Activated B cell treated with CpG ODN at 0.5 μM for 24 hours (primary cell): ENCODE measurements at regions of chr1 and their contacts with region 1.

Region 1: DNA sequence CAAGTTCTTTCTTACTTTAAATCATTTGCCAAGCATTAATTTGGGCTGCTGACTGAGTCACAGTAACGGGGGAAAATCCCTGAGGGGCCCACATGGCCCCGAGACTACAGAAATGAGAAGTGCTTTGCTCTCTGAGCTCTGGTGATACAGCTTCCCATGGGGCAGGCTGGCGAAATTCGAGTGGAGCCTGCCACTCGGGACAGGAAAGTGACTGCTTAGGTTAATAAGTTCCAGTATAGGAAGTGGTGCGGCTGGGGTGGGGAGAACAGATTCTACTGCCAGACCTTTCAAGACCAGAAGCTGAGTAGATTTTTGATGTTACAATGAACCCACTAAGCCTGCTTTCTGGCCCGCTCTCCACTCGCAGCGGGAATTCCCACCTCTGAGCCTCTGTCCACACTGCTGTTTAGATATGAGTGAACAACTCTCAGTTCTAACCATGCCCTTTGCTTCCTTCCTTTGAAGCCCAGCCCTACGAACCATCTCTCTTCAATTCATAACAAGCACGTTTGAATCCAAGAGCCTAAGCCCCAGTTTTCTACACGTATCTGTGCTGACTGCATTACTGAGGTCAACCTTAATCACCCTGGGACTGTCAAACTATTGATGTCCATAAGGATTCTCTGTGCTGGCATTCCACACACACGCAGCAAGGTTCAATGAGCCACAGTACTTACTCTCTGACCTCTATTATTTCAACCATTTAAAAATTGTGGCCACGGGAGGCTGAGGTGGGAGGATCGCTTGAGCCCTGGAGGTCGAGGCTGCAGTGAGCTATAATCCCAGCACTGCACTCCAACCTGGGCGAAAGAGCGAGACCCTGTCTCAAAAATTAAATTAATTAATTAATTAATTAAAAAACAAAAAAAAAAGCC is 9.6 kb downstream of the ZBTB17 start:
- DNase-seq: peak; percentile 75
- ATAC-seq: peak; percentile 79
- H3K4me3 Mint-ChIP-seq: peak overlapping the region; percentile 80
- H3K27ac Mint-ChIP-seq: peak overlapping the region; percentile 88
- H3K4me1 Mint-ChIP-seq: peaks cover 79% of the 10 kb centered on the region
- H3K27me3 Mint-ChIP-seq: no peaks in the 10 kb centered on the region
- CTCF ChIP-seq: no peak

Region 2: GRCh38 chr1:15835741-15836510 is 130.4 kb before region 1 on chr1:
- CTCF ChIA-PET with region 1: no interaction called
- POLR2A ChIA-PET with region 1: interaction called, 29 read pairs
- intact Hi-C with region 1: loop called (anchors 1 kb)
- DNase-seq: peak; percentile 96
- ATAC-seq: peak; percentile 49
- H3K4me3 Mint-ChIP-seq: peak overlapping the region; percentile 90
- H3K27ac Mint-ChIP-seq: peak overlapping the region; percentile 98
- H3K4me1 Mint-ChIP-seq: peaks cover 45% of the 10 kb centered on the region
- H3K27me3 Mint-ChIP-seq: no peaks in the 10 kb centered on the region
- CTCF ChIP-seq: no peak

Region 3: GRCh38 chr1:15885701-15886610 is 80.4 kb before region 1 on chr1:
- CTCF ChIA-PET with region 1: no interaction called
- POLR2A ChIA-PET with region 1: interaction called, 7 read pairs
- intact Hi-C with region 1: loop called (anchors 2 kb)
- DNase-seq: peak; percentile 49
- ATAC-seq: peak; percentile 23
- H3K4me3 Mint-ChIP-seq: peak overlapping the region; percentile 75
- H3K27ac Mint-ChIP-seq: peak overlapping the region; percentile 87
- H3K4me1 Mint-ChIP-seq: peaks cover 78% of the 10 kb centered on the region
- H3K27me3 Mint-ChIP-seq: no peaks in the 10 kb centered on the region
- CTCF ChIP-seq: no peak

Region 4: DNA sequence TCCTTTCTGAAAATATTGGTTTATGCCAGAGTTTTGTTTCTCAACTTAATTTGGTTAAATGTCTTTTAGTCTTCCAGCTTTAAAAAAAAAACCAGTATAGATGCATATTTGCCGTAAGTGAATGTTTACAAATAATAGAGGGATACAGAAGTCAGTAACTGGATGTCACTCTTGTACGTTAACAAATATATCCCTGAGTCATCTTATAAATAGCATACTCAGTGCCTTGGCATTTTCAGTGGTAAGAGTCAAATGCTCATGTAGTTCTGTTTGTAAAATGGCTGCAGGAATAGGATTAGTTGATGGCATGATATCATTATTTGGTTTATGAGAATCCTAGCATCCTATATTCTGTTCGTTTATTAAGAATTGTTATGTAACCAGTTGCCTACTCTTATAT is 63.4 kb before region 1 on chr1:
- CTCF ChIA-PET with region 1: no interaction called
- POLR2A ChIA-PET with region 1: no interaction called
- intact Hi-C with region 1: no loop called
- DNase-seq: no peak
- ATAC-seq: no peak
- H3K4me3 Mint-ChIP-seq: no peak overlapping the region
- H3K27ac Mint-ChIP-seq: no peak overlapping the region
- H3K4me1 Mint-ChIP-seq: peaks cover 26% of the 10 kb centered on the region
- H3K27me3 Mint-ChIP-seq: no peaks in the 10 kb centered on the region
- CTCF ChIP-seq: no peak

Region 5: DNA sequence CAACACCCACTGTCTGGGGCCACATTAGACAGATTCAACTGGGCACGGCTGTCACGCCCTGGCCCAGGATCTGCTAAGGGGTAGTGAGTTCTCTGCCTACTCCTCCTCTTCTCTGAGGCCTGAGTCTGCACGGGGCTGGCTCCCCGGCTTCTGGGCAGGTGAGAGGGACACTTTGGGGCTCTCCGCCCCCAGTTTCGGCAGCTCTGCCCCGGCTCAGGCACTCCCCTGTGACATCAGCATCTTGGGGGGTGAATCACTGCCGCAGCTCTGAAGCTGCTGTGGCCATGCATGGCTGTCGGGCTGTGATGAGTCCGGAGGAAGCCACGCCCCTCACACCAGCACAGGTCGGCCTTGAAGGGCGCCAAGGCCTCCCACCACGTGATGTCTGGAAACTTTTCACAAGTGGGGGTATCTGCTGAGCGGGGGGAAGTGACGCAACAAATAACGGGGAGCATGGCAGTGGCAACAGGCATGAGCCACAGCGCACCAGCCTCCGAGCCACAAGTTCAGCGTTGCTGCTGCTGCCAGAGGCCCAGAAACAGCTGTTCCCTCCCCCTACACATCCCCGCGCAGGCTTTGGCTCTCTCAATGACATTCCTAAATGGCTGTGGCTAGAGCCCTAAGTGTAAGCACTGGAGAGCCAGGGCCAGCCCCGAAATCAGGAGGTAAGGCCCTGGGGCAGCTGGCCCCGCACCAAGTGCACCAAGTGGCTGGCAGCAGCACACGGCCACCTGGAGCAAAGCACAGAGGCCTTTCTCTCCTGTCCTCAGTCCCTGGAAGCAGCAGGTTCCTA is 16.7 kb before region 1 on chr1:
- CTCF ChIA-PET with region 1: interaction called, 3 read pairs
- POLR2A ChIA-PET with region 1: interaction called, 90 read pairs
- intact Hi-C with region 1: loop called (anchors 1 kb)
- DNase-seq: peak; percentile 62
- ATAC-seq: peak; percentile 82
- H3K4me3 Mint-ChIP-seq: peak overlapping the region; percentile 67
- H3K27ac Mint-ChIP-seq: peak overlapping the region; percentile 89
- H3K4me1 Mint-ChIP-seq: peaks cover 73% of the 10 kb centered on the region
- H3K27me3 Mint-ChIP-seq: no peaks in the 10 kb centered on the region
- CTCF ChIP-seq: no peak

Region 6: DNA sequence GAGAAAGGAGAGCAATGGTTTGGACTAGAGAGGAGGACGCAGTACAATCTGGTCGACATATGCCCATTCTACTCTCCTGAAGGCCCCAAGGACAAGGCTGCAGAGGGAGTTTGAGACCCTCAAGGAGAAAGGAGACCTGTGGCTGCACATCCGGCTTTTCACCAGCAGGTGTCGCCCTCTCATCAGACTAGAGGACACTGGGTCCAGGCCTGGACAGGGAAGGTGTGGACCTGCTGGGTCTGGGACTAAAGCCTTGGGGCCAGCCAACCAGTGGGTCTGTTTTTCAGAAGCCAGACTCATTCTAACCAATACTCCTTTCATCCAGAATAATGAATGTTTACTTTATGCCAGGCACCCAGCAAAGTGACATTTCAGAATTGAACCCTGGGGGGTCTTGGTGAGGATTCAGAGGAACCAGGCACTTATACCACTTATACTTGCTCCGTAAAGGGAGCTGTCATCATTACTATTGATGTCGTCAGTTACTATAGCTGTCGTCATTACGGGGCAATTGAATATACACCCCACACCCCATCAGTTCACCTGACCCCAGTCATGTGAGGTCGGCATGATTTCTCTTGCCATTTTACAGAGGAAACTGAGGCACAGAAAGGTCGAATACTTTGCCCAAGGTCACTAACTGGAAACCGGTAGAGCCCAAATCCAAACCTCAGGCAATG is 42.9 kb after region 1 on chr1:
- CTCF ChIA-PET with region 1: interaction called, 3 read pairs
- POLR2A ChIA-PET with region 1: interaction called, 8 read pairs
- intact Hi-C with region 1: loop called (anchors 5 kb)
- DNase-seq: peak; percentile 67
- ATAC-seq: peak; percentile 33
- H3K4me3 Mint-ChIP-seq: no peak overlapping the region
- H3K27ac Mint-ChIP-seq: no peak overlapping the region
- H3K4me1 Mint-ChIP-seq: peaks cover 42% of the 10 kb centered on the region
- H3K27me3 Mint-ChIP-seq: no peaks in the 10 kb centered on the region
- CTCF ChIP-seq: peak; percentile 84